PC-3 (cell line): ENCODE measurements at regions of chr16 and their contacts with region 1.

Region 1: DNA sequence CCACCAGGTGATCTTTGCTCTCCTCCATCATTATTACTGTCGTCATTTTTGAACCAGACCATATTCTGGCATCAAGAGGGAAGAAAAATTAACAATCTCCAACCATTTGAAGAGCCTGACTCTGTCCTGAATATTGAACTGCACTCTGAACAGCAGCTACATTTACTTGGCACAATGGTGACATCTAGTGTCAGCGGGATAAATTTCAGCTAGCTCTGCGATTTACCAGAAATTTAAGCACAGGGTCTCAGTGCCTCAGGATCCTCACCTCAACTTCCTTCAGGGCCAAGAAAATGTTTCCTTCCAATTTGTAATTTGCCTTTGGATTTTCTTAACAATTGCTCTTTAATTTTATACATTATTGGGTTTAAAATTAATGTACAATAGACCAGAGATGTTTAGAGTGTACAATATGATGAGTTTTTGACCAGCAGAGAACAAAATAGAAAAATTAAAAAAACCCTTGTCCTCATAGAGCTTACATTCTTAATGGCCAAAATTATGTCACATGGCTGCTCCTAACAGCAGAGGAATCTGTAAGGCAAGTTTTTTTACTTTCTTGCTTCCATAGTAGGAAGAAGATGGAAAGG is 10.7 kb upstream of the ZNF19 start:
- DNase-seq: peak; percentile 71
- ATAC-seq: peak; percentile 72
- H3K4me3 ChIP-seq: no peak overlapping the region
- H3K27ac ChIP-seq: no peak overlapping the region
- H3K4me1 ChIP-seq: no peaks in the 10 kb centered on the region
- H3K27me3 ChIP-seq: no peaks in the 10 kb centered on the region
- CTCF ChIP-seq: peak; percentile 70

Region 2: GRCh38 chr16:71412270-71413160 is 87.4 kb before region 1 on chr16:
- CTCF ChIA-PET with region 1: interaction called, 6 read pairs
- POLR2A ChIA-PET with region 1: no interaction called
- intact Hi-C with region 1: loop called (anchors 1 kb)
- DNase-seq: peak; percentile 79
- ATAC-seq: peak; percentile 90
- H3K4me3 ChIP-seq: no peak overlapping the region
- H3K27ac ChIP-seq: no peak overlapping the region
- H3K4me1 ChIP-seq: no peaks in the 10 kb centered on the region
- H3K27me3 ChIP-seq: peaks cover 20% of the 10 kb centered on the region
- CTCF ChIP-seq: peak; percentile 74

Region 3: GRCh38 chr16:71537643-71538042 is 37.8 kb after region 1 on chr16:
- CTCF ChIA-PET with region 1: no interaction called
- POLR2A ChIA-PET with region 1: no interaction called
- intact Hi-C with region 1: loop called (anchors 5 kb)
- DNase-seq: peak; percentile 63
- ATAC-seq: peak; percentile 80
- H3K4me3 ChIP-seq: no peak overlapping the region
- H3K27ac ChIP-seq: no peak overlapping the region
- H3K4me1 ChIP-seq: no peaks in the 10 kb centered on the region
- H3K27me3 ChIP-seq: no peaks in the 10 kb centered on the region
- CTCF ChIP-seq: peak; percentile 61

Region 4: DNA sequence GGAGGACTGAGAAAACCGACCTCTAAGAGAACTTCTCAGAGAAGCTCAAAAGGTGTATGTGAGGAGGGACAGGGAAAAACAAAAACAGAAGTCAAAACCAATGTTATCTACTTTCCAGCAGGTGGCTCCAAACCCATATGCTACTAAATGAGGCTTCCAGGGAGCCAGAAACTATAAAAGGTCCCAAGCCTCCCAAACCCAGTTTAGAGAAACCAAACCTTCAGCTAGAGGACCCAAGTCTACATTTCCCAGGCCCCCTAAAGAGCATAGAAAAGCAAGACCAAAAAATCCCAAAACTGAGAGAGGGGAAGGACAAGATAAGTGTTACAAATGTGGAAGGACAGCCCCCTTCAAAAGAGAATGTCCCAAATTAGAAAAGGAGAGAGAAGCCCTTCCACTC is 566.9 kb after region 1 on chr16:
- CTCF ChIA-PET with region 1: no interaction called
- POLR2A ChIA-PET with region 1: no interaction called
- intact Hi-C with region 1: no loop called
- DNase-seq: peak; percentile 42
- ATAC-seq: peak; percentile 70
- H3K4me3 ChIP-seq: no peak overlapping the region
- H3K27ac ChIP-seq: no peak overlapping the region
- H3K4me1 ChIP-seq: no peaks in the 10 kb centered on the region
- H3K27me3 ChIP-seq: 0 out of 2 replicates have a peak, but pooled peaks cover 3% of the 10 kb centered on the region
- CTCF ChIP-seq: peak; percentile 65